SK-N-SH (cell line): ENCODE measurements at regions of chr10 and their contacts with region 1.

Region 1: GRCh38 chr10:91006001-91006751 is 85.3 kb upstream of the ANKRD1 start:
- DNase-seq: peak; percentile 28
- H3K4me3 ChIP-seq: no peak overlapping the region; a peak in 1 of 4 replicates
- H3K27ac ChIP-seq: peak overlapping the region; percentile 19 to 55; a peak in 2 of 4 replicates
- H3K4me1 ChIP-seq: no peaks in the 10 kb centered on the region; a peak in 2 of 4 replicates
- H3K27me3 ChIP-seq: no peaks in the 10 kb centered on the region
- CTCF ChIP-seq: peak; percentile 95
- EP300 ChIP-seq: no peak
- RAD21 ChIP-seq: peak; percentile 88

Region 2: DNA sequence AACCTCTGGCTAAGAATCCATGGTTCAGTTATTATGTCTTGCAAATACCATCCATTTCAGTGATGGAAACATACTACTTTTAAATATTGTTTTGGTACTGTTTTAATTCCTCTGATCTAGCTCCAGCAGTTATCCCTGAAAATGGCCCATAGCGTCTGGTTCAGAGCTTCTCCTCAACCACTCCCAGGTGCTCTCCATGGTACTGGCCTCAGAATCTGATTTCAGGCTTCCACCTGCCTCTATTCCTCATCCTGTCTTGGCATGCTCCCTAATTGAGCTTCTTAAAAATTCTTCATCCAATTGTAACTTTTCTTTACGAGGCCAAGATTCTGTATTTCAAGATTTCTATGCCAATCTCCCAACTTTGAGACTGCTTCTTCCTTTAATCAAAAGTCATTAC is 384.6 kb before region 1 on chr10:
- CTCF ChIA-PET with region 1: no interaction called
- POLR2A ChIA-PET with region 1: no interaction called
- DNase-seq: no peak
- H3K4me3 ChIP-seq: no peak overlapping the region
- H3K27ac ChIP-seq: no peak overlapping the region
- H3K4me1 ChIP-seq: no peaks in the 10 kb centered on the region
- H3K27me3 ChIP-seq: no peaks in the 10 kb centered on the region
- CTCF ChIP-seq: no peak
- EP300 ChIP-seq: no peak
- RAD21 ChIP-seq: no peak

Region 3: DNA sequence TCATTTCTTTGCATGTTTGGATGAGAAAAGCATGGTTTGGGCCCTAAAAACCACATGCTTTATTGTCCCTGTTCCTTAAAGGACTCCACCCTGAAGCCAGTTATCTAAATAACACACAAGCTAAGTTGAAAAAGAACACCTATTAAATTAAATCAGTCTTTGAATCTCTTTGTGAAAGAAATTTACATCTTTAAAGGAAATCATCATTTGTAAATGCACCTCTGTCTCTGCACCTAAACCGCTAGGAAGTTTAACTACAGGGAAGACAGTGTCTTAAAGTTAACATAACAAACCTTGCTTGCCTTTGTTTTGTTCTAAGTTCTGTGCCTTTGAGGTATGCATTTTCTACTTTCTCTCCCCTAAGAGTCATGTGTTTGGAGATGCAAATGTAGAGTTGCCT is 201.0 kb before region 1 on chr10:
- CTCF ChIA-PET with region 1: no interaction called
- POLR2A ChIA-PET with region 1: no interaction called
- DNase-seq: no peak
- H3K4me3 ChIP-seq: no peak overlapping the region
- H3K27ac ChIP-seq: no peak overlapping the region
- H3K4me1 ChIP-seq: no peaks in the 10 kb centered on the region
- H3K27me3 ChIP-seq: peaks cover 22% of the 10 kb centered on the region; the same call in 1 of the 2 replicates
- CTCF ChIP-seq: no peak
- EP300 ChIP-seq: no peak
- RAD21 ChIP-seq: no peak

Region 4: DNA sequence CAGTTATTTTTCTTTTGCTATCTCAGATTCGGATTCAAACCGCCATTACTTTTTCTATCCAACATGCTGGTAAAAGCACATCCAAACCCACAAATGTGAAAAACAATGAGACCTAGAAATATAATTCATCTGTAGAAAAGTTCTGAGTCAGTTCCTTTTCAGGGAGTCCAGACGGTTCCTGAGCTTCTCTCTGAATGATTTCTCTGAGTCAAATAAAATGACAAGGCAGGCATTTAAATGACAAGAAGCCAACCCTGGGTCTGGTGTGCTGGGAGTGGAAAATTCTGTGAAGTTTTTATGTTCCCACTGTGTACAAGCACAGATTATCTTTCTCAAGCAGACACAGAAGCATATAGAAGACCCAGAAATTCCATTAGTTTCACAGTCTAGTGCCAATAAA is 11.0 kb after region 1 on chr10:
- CTCF ChIA-PET with region 1: interaction called, 18 read pairs
- POLR2A ChIA-PET with region 1: no interaction called
- DNase-seq: no peak
- H3K4me3 ChIP-seq: no peak overlapping the region
- H3K27ac ChIP-seq: no peak overlapping the region
- H3K4me1 ChIP-seq: no peaks in the 10 kb centered on the region
- H3K27me3 ChIP-seq: no peaks in the 10 kb centered on the region
- CTCF ChIP-seq: no peak
- EP300 ChIP-seq: no peak
- RAD21 ChIP-seq: no peak

Region 5: DNA sequence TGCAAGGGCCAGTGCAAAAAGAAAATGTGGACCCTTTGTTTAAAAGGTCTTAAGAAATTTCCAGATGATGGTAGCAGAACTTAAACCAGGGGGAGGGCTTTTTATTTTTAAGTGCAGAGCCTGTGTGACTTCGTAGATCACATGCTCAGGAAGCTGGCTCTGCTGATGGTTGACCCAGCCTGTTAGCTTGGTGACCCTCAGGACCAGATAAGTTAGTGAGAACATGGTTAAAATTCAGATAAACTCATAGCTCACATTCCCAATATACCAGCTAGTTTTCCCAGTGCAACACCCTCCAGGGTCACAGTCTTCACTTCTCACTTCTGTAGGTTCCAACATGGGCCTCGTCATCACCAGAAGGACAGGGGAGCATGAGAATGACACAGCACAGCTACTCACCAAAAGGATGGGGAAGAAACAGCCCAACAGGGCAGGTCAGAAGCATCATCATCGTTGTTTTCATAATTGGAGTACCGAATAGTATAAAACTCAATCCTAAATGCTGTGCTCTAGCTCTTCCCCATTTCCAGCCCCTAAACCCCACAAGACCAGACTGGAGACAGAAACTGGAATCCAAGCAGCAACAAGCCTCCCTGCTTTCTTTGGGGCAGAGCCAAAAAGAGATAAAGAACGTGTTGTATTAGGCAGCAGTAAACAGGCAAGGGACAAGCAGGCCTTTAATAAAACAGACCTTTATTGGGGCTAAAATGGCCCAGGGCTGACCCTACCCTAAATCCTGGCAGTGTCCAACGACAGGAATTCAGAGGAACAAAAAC is 16.9 kb after region 1 on chr10:
- CTCF ChIA-PET with region 1: interaction called, 18 read pairs
- POLR2A ChIA-PET with region 1: no interaction called
- DNase-seq: no peak
- H3K4me3 ChIP-seq: no peak overlapping the region
- H3K27ac ChIP-seq: peak overlapping the region in 1 of 2 experiments; percentile 11; a peak in 1 of 4 replicates
- H3K4me1 ChIP-seq: peaks cover 0 to 6% of the 10 kb centered on the region in 2 experiments; a peak in 2 of 4 replicates
- H3K27me3 ChIP-seq: no peaks in the 10 kb centered on the region
- CTCF ChIP-seq: no peak
- EP300 ChIP-seq: no peak
- RAD21 ChIP-seq: no peak

Region 6: DNA sequence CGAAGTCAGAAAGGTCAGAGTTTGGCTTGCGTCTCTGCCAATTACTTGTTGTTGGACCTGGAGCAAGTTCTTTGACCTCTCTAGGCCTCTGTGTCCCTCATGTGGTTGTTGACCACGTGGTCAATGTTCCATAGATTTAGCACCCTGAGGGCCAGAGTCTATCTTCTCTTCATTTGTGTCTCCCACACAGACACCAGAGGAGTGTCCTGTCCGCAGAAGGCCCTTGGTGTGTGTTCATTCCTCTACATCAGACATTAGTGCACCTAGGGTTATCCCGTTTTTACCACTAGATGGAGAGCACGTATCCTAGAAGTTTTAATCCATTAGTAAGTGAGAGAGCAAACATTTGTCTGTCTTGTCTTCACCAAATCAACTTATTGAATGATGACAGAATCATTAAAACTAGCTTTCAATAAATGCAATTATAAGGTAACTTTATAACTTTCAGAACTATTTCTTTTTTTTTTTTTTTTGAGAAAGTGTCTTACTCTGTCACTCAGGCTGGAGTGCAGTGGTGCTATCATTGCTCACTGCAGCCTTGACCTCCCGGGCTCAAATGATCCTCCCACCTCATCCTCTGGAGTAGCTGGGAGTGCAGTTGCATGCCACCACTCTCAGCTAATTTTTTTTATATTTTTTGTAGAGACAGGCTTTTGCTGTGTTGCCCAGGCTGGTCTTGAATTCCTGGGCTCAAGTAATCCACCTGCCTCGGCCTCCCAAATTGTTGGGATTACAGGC is 37.2 kb after region 1 on chr10:
- CTCF ChIA-PET with region 1: interaction called, 19 read pairs
- POLR2A ChIA-PET with region 1: no interaction called
- DNase-seq: peak; percentile 52
- H3K4me3 ChIP-seq: no peak overlapping the region; a peak in 1 of 4 replicates
- H3K27ac ChIP-seq: no peak overlapping the region
- H3K4me1 ChIP-seq: no peaks in the 10 kb centered on the region
- H3K27me3 ChIP-seq: no peaks in the 10 kb centered on the region
- CTCF ChIP-seq: peak; percentile 62
- EP300 ChIP-seq: no peak
- RAD21 ChIP-seq: peak; percentile 88

Region 7: GRCh38 chr10:91088300-91089140 is 82.3 kb after region 1 on chr10:
- CTCF ChIA-PET with region 1: no interaction called
- POLR2A ChIA-PET with region 1: no interaction called
- DNase-seq: no peak
- H3K4me3 ChIP-seq: no peak overlapping the region
- H3K27ac ChIP-seq: no peak overlapping the region
- H3K4me1 ChIP-seq: no peaks in the 10 kb centered on the region
- H3K27me3 ChIP-seq: no peaks in the 10 kb centered on the region
- CTCF ChIP-seq: peak; percentile 33
- EP300 ChIP-seq: no peak
- RAD21 ChIP-seq: peak; percentile 46